Heart left ventricle (tissue), 16 donors: ENCODE measurements at regions of chr18 and their contacts with region 1.

Region 1: DNA sequence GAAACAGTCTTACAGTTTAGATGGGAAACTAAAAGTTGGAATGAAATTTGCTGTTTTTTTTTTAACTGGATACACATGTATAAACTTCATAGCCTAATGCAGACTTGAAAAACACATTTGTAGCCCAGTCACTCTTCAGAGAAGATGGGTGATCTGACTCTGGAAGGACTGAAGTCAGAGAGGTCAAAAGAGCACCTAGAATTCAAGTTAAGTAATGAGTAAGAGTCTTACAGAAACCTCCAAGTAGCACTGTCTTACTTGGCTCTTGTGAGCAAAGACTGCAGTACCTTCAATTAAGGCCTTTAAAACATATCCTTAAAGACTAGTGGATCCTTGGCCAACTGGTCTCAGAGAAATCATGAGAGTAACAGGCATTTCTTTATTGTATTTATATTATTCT is 41.9 kb downstream of the TRAPPC8 start:
- DNase-seq: no peak
- ATAC-seq: no peak
- H3K4me3 ChIP-seq: no peak overlapping the region
- H3K27ac ChIP-seq: no peak overlapping the region
- H3K4me1 ChIP-seq: no peaks in the 10 kb centered on the region
- H3K27me3 ChIP-seq: no peaks in the 10 kb centered on the region
- CTCF ChIP-seq: no peak
- POLR2A ChIP-seq: no peak

Region 2: DNA sequence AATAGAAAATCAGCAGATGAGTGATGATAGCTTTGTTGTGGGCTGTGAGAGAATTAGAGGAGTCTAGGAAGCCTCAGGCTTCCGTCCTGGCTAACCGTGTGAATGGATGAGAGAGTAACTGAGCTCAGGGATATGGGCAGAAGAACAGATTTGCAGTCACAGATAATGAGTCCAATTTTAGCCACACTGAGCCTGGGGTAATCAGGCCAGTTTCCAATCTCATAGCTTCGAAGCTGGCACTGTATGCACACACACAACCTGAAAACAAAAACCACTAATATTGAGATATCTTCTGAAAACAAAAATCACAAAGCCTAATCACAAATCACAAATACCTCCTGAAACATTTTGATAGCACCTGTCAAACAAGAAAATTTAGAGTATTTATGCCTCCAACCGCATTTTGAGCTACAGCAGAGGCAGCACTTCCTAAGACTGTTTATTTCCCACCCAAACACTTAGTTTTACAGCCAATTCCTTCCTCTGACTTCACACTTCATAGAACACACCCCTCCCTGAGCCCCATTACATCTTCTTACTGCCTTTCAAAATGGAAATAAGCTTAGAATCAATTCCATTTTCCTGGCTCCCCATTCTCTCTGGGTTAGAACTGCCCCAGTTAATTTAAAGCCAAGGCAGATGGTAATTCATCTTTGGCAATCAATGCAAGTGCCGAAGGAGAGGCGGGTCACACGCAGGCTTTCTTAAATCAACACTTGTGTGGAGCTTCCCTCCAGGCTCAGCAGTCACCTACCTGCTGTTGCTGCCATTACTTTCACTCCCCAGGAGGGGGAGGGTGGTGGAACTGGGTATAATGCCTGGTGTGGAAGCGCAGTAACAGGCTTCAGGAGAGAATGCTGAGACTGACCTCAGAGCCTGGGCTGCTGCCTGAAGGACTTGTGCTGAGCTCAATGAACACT is 290.5 kb before region 1 on chr18:
- intact Hi-C with region 1: no loop called
- DNase-seq: peak in 1 of 5 donors; percentile 28
- ATAC-seq: peak in 3 of 4 donors; percentile 64 to 83 (median 77)
- H3K4me3 ChIP-seq: no peak overlapping the region
- H3K27ac ChIP-seq: peak overlapping the region in 1 of 12 donors; percentile 24
- H3K4me1 ChIP-seq: peaks cover 0 to 22% (median 0%) of the 10 kb centered on the region in 12 donors
- H3K27me3 ChIP-seq: no peaks in the 10 kb centered on the region
- CTCF ChIP-seq: peak in 2 of 12 donors; percentile 13 to 29
- POLR2A ChIP-seq: no peak

Region 3: GRCh38 chr18:31857526-31858106 is 43.4 kb before region 1 on chr18:
- intact Hi-C with region 1: loop called in 2 of 10 experiments (anchors 10 kb)
- DNase-seq: no peak
- ATAC-seq: no peak
- H3K4me3 ChIP-seq: no peak overlapping the region
- H3K27ac ChIP-seq: no peak overlapping the region
- H3K4me1 ChIP-seq: no peaks in the 10 kb centered on the region
- H3K27me3 ChIP-seq: no peaks in the 10 kb centered on the region
- CTCF ChIP-seq: no peak
- POLR2A ChIP-seq: no peak